ENCODE measurements at regions of chr1 and their contacts with region 1.

Region 1: DNA sequence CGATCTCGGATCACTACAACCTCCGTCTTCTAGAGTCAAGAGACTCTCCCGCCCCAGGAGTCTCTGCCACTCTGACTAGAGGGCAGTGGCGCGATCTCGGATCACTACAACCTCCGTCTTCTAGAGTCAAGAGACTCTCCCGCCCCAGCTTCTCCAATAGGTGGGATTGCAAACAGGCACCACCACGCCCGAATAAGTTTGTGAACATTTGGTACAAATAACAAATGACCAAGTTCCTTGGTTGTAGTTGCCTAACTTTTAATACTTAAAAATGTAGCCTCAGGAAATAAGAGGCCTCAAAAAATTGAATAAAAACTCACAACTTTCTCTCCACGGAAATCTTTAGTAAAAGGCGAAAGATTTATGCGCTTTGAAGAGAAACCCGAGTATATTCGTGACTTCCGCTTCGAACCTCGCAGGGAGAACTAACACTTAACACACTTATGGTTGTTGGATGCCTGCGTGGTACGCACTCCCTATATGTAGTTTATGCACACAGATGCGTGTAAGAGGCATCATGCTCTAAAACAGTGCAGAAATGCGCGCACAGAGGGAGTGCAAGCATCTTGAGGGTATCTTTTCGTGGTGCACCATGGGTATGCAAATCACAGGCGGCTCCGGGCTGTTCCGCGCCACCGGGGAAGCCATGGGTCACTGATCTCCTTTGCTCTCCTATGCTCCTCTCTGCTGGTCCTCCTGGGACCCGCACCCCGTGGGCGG is 11.4 kb downstream of the BTBD19 start:
- DNase-seq: peak; percentile 94
- H3K4me3 Mint-ChIP-seq: peak overlapping the region; percentile 74
- H3K27ac Mint-ChIP-seq: peak overlapping the region; percentile 99
- H3K4me1 Mint-ChIP-seq: peaks cover 37% of the 10 kb centered on the region
- H3K27me3 Mint-ChIP-seq: no peaks in the 10 kb centered on the region
- CTCF ChIP-seq: no peak

Region 2: DNA sequence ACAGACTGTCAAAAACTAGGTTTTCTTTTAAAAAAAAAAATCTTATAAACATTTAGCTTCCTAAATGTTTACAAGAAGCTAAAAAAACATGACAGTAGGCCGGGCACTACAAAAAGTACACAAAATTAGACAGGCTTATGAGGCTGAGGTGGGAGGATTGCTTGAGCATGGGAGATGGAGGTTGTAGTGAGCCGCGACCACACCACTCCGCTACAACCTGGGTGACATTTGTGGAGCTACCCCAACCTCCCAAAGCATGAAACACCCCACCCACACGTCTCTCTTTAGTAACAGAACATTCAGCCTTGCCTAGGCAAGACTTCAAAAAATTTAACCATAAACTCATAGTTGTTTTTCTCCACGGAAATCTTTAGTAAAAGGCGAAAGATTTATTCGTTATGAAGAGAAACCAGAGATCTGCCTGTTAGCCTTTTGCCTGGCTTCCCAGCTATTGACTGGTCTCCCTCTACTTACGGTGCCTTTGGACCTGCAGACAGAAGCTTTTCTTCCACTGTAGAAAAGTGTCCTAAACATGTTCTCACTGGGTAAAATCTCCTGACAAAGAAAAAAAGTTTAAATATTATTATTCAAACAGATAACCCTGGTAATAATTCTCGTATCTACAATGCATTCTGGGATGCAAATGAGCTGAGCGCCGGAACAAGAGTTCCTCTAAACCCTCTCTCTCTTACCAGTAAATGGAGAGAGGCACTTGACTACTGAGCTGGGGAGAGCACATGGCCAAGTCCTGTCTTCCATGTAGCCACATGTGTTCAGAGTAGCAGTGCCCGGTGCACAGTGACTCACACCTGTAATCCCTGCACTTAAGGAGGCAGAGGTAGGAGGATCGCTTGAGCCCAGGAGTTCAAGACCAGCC is 98.0 kb before region 1 on chr1:
- CTCF ChIA-PET with region 1: interaction called, 3 read pairs
- POLR2A ChIA-PET with region 1: interaction called, 14 read pairs
- intact Hi-C with region 1: no loop called
- DNase-seq: peak; percentile 98
- H3K4me3 Mint-ChIP-seq: peak overlapping the region; percentile 39
- H3K27ac Mint-ChIP-seq: peak overlapping the region; percentile 98
- H3K4me1 Mint-ChIP-seq: peaks cover 23% of the 10 kb centered on the region
- H3K27me3 Mint-ChIP-seq: no peaks in the 10 kb centered on the region
- CTCF ChIP-seq: no peak

Region 3: DNA sequence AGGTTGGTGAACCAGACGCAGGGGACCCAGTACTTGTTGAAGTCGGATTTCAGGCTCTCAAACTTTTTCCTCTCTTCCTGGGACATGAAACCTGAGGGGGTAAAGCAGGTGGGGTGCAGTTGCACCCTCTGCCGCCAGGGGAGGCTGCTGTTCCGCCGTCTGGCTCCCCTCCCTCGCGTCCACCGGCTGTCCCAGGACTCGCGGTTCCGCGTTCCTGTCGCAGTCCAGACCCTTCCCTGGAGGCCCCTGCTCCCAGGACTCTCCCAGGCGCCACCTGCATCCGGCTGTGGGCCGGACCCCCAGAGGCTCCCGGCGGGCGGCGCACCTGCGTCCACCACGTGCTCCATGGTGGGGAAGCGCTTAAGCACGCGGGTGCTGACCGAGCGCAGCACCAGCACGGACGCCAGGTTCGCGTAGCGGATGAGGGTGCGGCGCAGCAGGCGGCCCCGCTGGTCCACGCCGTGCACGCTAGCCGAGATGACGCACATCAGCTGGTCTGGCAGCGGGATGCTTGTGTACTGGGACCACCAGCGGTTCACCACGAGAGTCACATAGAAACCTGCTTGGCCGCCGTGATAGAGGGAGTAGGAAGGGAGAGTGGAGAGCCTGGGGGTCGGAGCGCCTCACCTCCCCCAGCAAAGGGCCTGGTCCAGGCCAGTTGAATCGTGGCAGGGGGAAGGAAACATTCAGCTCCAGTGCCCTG is 33.5 kb before region 1 on chr1:
- CTCF ChIA-PET with region 1: interaction called, 5 read pairs
- POLR2A ChIA-PET with region 1: interaction called, 4 read pairs
- intact Hi-C with region 1: loop called (anchors 1 kb)
- DNase-seq: peak; percentile 68
- H3K4me3 Mint-ChIP-seq: peak overlapping the region; percentile 58
- H3K27ac Mint-ChIP-seq: peak overlapping the region; percentile 46
- H3K4me1 Mint-ChIP-seq: peaks cover 7% of the 10 kb centered on the region
- H3K27me3 Mint-ChIP-seq: no peaks in the 10 kb centered on the region
- CTCF ChIP-seq: peak; percentile 93

Region 4: DNA sequence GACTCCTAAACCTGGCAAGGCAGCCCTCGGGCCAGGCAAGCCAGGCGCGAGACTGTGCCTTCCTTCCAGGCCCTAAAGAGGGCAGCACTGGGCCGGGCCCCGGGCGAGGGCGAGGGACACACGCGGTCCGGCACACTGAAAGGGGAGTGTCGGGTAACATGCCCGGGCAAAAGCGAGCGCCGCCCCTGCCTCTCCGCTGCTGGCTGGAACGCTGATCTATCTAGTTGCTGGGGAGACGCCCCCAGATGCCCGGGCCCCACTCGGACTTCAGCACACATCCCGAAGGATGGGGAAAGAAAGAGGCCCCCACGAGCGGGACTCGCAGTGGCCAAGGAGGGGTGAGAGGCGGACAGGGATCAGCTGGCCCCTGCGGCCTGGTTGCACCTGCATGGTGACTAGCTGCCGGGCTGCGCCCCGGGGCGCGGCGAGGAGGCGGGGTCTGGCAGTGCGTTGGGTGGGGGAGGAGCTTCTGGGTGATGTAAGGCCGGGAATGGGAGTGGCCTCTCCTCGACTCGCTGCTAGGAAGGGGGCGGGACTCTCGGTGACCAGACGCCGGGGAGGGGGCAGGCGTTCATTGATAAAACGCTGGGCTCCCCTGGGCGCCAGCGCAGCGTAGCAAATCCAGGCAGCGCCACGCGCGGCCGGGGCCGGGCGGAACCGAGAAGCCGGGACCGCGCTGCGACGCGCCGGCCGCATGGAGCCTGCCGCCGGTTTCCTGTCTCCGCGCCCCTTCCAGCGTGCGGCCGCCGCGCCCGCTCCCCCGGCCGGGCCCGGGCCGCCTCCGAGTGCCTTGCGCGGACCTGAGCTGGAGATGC is 19.8 kb before region 1 on chr1 and contains the start of gene PLK3:
- CTCF ChIA-PET with region 1: interaction called, 9 read pairs
- POLR2A ChIA-PET with region 1: interaction called, 50 read pairs
- intact Hi-C with region 1: loop called (anchors 2 kb)
- DNase-seq: peak; percentile 97
- H3K4me3 Mint-ChIP-seq: peak within 1 kb of the TSS; percentile 86
- H3K27ac Mint-ChIP-seq: peak within 1 kb of the TSS; percentile 100
- H3K4me1 Mint-ChIP-seq: peaks cover 23% of the 10 kb centered on the region
- H3K27me3 Mint-ChIP-seq: no peaks in the 10 kb centered on the region
- CTCF ChIP-seq: peak; percentile 85
- total RNA-seq, gene PLK3: 47.2 and 68.0 TPM in 2 replicates

Region 5: GRCh38 chr1:44807262-44808062 is 12.3 kb before region 1 on chr1 and contains the start of gene DYNLT4:
- CTCF ChIA-PET with region 1: no interaction called
- POLR2A ChIA-PET with region 1: interaction called, 79 read pairs
- intact Hi-C with region 1: loop called (anchors 1 kb)
- DNase-seq: peak; percentile 99
- H3K4me3 Mint-ChIP-seq: peak within 1 kb of the TSS; percentile 52
- H3K27ac Mint-ChIP-seq: peak within 1 kb of the TSS; percentile 100
- H3K4me1 Mint-ChIP-seq: peaks cover 48% of the 10 kb centered on the region
- H3K27me3 Mint-ChIP-seq: no peaks in the 10 kb centered on the region
- CTCF ChIP-seq: no peak
- total RNA-seq, gene DYNLT4: not detected in 2 replicates

Region 6: GRCh38 chr1:44835738-44836675 is 16.2 kb after region 1 on chr1:
- CTCF ChIA-PET with region 1: interaction called, 13 read pairs
- POLR2A ChIA-PET with region 1: interaction called, 3 read pairs
- intact Hi-C with region 1: no loop called
- DNase-seq: peak; percentile 78
- H3K4me3 Mint-ChIP-seq: no peak overlapping the region
- H3K27ac Mint-ChIP-seq: peak overlapping the region; percentile 13
- H3K4me1 Mint-ChIP-seq: no peaks in the 10 kb centered on the region
- H3K27me3 Mint-ChIP-seq: no peaks in the 10 kb centered on the region
- CTCF ChIP-seq: peak; percentile 81